Activated T-helper 2 cell treated with anti-CD3 and anti-CD28 coated beads, Interferon-gamma antibody, Interleukin-2, Interleukin-4, amounts not matched to agents 10 μg/mL and 5 μg/mL and 100 μg/mL, durations not matched to agents 14 hours and 24 hours and 36 hours (primary cell): ENCODE measurements at regions of chr4 and their contacts with region 1.

Region 1: DNA sequence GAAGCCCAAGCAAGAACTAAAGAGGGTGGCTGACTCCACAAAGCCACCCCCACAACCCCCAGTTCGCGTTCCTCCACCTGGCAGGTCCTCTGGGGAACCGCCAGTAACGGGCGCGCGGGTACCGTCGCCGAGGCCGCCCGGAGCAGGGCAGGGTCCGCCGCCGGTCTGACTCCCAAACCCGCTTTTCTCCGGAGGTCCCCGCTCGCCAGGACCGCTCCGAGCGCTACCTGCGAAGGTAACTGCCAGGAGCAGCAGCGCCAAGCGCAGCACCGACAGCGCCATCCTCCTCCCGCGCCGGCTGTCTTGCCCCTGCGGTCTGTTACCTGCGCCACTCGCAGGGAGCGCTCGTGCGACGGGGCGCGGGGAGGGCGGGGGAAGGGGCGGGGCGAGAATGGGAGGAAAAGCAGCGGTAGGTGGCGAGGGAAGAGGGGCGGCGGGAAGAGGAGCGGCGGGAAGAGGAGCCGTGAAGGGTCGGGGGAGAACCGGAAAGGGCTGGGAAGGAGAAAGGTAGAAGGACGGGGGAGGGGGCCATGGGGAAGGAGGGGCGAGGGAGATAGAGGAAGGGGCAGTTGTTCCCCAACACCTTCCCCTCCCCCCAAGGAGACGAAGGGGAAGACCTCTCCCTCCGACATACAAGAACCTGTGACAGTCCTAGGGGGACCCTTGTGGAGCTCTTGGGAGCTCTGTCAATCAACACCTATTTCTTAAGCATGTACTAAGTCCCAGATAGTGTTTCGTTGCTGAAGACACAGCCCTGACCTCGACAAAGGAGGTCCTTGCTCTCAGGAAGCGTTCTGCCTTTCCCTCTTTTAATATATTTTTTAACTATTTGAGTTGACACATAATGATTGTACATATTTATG is at the start of gene SPINK2:
- DNase-seq: peak; percentile 45
- H3K4me3 Mint-ChIP-seq: peak within 1 kb of the TSS; percentile 58
- H3K27ac Mint-ChIP-seq: no peak within 1 kb of the TSS
- H3K4me1 Mint-ChIP-seq: peaks cover 24% of the 10 kb centered on the region
- H3K27me3 Mint-ChIP-seq: peaks cover 41% of the 10 kb centered on the region
- total RNA-seq, gene SPINK2: 0.75 TPM in 1 of 2 replicates, not detected in the other

Region 2: GRCh38 chr4:56681158-56681852 is 140.3 kb before region 1 on chr4 and contains the start of gene HOPX:
- intact Hi-C with region 1: loop called (anchors 5 kb)
- DNase-seq: peak; percentile 17
- H3K4me3 Mint-ChIP-seq: peak within 1 kb of the TSS; percentile 28
- H3K27ac Mint-ChIP-seq: peak within 1 kb of the TSS; percentile 36
- H3K4me1 Mint-ChIP-seq: peaks cover 25% of the 10 kb centered on the region
- H3K27me3 Mint-ChIP-seq: peaks cover 59% of the 10 kb centered on the region
- total RNA-seq, gene HOPX: 58.8 and 60.2 TPM in 2 replicates

Region 3: GRCh38 chr4:56757821-56758411 is 63.7 kb before region 1 on chr4:
- intact Hi-C with region 1: loop called (anchors 5 kb)
- DNase-seq: peak; percentile 70
- H3K4me3 Mint-ChIP-seq: peak overlapping the region; percentile 61
- H3K27ac Mint-ChIP-seq: peak overlapping the region; percentile 95
- H3K4me1 Mint-ChIP-seq: peaks cover 47% of the 10 kb centered on the region
- H3K27me3 Mint-ChIP-seq: peaks cover 11% of the 10 kb centered on the region

Region 4: DNA sequence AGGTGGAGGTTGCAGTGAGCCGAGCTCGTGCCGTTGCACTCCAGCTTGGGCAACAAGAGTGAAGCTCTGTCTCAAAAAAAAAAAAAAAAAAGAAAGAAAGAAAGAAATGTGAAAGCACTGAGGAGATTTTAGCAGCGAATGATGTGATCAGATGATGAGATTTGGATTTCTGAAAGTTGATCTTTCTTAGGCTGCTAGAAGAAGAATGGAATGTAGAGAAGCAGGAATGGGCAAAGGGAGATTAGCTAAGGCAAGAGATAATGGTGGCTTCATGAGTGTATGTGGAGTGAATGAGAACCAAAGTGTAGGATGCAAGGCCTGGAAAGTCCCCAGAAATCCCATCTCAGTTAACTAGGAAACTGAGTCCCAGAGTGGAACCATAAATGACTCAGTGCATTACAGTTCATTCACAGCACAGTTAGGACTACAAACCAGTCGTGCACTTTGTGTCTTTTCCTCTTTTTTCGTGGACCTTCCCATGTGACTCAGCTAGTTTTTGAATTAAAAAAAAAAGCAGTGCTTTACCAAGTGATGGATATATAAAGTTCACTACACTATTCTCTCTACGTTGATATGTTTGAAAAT is 58.3 kb after region 1 on chr4:
- intact Hi-C with region 1: no loop called
- DNase-seq: no peak
- H3K4me3 Mint-ChIP-seq: no peak overlapping the region
- H3K27ac Mint-ChIP-seq: no peak overlapping the region
- H3K4me1 Mint-ChIP-seq: no peaks in the 10 kb centered on the region
- H3K27me3 Mint-ChIP-seq: no peaks in the 10 kb centered on the region

Region 5: DNA sequence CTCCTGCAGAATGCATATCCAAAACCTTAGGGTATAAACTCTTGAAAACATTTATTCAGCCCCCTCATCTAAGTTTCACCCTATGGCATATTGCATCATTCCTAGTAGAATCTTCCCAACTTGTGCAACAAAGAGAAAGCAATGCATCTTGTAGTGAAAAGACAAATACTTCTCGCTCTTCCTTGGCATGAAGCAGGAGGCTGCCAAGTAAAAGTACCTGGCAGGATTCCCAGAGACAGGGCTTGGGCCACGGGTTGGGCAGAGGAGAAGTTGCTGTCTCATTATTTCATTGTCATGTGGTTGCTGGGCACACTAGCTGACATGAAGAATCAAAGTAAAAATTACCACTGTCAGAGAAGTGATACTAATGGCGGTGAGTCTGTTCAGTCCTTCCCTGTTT is 668.9 kb after region 1 on chr4:
- intact Hi-C with region 1: no loop called
- DNase-seq: no peak
- H3K4me3 Mint-ChIP-seq: no peak overlapping the region
- H3K27ac Mint-ChIP-seq: no peak overlapping the region
- H3K4me1 Mint-ChIP-seq: no peaks in the 10 kb centered on the region
- H3K27me3 Mint-ChIP-seq: no peaks in the 10 kb centered on the region